ENCODE measurements at regions of chr15 and their contacts with region 1.

Region 1: DNA sequence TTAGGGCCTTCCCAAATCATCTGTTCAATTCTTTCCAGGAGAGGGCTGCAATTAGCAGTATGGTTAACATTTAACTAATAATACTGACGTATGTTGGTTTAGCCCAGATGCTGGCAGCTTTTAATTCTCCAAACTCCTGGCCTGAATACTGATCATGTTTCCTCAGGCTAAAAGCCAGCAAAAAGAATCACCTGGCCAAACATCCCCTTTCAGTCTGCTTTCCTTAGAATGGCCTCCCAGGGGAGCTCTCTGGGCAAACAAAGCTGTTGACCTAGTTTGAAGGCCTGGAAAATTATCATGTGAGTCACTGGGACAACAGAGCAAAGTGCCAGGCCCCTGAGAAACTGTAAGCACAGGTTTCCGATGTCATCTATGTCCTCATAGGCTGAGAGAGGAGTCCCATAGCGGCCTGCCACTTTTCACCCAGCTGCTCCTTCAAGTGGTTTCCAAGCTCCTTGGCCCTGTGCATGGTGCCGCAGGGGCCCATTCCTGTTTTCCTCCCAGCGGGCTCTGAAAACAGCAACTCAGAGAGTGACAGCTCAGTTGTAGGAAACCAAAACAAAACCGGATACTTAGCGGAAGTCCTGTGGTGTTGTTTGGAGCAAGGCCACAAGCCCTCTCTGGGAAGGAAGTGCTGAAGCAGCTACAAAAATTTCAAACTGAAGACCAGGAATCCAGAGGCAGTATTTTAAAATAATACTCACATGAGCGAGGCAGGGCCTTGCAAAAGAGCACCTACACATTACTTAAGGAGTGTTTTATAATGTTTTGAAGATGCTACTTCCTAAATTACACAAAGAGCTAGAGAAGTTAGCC is 36.5 kb upstream of the RAB11A start:
- DNase-seq: peak; percentile 80
- ATAC-seq: peak; percentile 77
- H3K4me3 Mint-ChIP-seq: peak overlapping the region; percentile 51
- H3K27ac Mint-ChIP-seq: peak overlapping the region; percentile 95
- H3K4me1 Mint-ChIP-seq: peaks cover 48% of the 10 kb centered on the region
- H3K27me3 Mint-ChIP-seq: no peaks in the 10 kb centered on the region

Region 2: GRCh38 chr15:65792130-65792987 is 40.4 kb before region 1 on chr15 and contains the start of gene DENND4A:
- CTCF ChIA-PET with region 1: interaction called, 48 read pairs
- DNase-seq: peak; percentile 99
- ATAC-seq: peak; percentile 84
- H3K4me3 Mint-ChIP-seq: peak within 1 kb of the TSS; percentile 93
- H3K27ac Mint-ChIP-seq: peak within 1 kb of the TSS; percentile 97
- H3K4me1 Mint-ChIP-seq: peaks cover 63% of the 10 kb centered on the region
- H3K27me3 Mint-ChIP-seq: no peaks in the 10 kb centered on the region
- total RNA-seq, gene DENND4A: 47.3 to 52.0 TPM

Region 3: DNA sequence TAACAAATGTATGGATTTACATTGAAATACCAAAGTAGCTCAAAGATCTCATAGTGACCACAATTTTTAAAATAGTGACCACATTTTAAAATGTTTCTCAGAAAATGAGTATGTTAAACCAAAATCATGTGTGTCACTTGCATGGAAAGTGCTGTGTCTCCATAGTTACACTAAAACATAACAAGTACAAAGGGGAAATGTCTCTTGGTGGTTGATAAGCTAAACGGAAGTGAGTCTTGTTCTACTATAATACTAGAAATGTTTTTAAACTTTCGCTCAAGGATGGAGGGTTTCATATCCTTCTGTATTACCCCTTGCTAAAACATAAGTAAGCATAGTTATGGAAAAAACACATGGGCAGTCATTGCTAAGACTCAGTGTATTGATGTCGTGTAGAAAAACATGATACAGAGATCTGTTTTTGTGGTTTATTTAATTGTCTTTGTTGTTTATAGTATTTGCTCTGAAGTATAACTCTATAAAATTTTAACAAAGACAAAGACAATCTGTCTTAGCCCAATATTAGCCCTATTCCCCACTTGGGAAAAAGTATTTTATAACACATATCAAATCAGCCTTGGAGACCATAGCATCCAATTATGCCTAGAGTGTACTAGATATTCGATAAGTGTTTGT is 13.7 kb before region 1 on chr15:
- CTCF ChIA-PET with region 1: interaction called, 16 read pairs
- DNase-seq: no peak
- ATAC-seq: peak; percentile 91
- H3K4me3 Mint-ChIP-seq: peak overlapping the region; percentile 40
- H3K27ac Mint-ChIP-seq: peak overlapping the region; percentile 53
- H3K4me1 Mint-ChIP-seq: peaks cover 52% of the 10 kb centered on the region
- H3K27me3 Mint-ChIP-seq: peaks cover 2% of the 10 kb centered on the region

Region 4: DNA sequence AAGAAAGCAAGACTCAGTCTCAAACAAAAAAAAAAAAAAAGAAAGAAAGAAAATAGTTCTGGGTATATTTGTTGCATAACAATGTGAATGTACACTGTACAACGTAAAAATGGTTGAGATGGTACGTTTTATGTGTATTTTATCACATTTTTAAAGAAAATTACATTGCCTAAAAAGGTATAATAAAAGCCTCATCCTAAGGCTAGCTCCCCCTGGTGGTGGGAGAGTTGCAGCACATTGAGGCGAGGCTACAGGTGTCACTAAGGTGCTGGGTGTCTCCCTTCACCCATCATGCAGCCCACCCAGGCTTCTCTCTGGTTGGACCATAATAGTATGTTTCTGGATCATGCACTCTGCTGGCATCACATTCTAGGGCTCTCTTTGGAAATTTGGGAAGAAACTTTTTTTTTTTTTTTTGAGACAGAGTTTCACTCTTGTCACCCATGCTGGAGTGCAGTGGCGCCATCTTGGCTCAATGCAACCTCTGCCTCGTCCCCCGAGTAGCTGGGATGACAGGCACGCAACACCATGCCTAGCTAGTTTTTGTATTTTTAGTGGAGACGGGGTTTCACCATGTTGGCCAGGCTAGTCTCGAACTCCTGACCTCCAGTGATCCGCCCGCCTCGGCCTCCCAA is 24.2 kb after region 1 on chr15:
- CTCF ChIA-PET with region 1: interaction called, 24 read pairs
- DNase-seq: peak; percentile 89
- ATAC-seq: peak; percentile 89
- H3K4me3 Mint-ChIP-seq: no peak overlapping the region
- H3K27ac Mint-ChIP-seq: no peak overlapping the region
- H3K4me1 Mint-ChIP-seq: peaks cover 10% of the 10 kb centered on the region
- H3K27me3 Mint-ChIP-seq: peaks cover 12% of the 10 kb centered on the region

Region 5: DNA sequence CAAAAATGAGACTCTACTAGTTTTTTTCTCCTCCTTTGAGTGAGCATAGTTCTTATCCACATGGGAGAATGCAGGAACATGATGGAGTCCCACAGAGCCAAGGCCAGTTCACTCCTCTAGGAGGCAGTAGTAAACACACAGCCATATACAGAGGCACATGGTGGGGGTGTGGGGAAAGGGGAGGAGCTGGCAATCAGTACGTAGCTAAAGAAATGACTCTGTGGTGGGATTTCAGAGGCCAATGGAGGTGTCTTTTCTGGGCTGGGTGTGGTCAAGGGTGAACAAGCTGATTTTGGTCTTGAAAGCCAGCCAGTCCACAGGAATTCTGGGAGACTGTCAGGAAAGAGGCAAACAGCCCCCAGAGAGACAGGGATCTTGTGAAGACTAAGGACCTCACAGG is 29.9 kb after region 1 on chr15:
- CTCF ChIA-PET with region 1: interaction called, 24 read pairs
- DNase-seq: peak; percentile 83
- ATAC-seq: peak; percentile 99
- H3K4me3 Mint-ChIP-seq: no peak overlapping the region
- H3K27ac Mint-ChIP-seq: no peak overlapping the region
- H3K4me1 Mint-ChIP-seq: peaks cover 11% of the 10 kb centered on the region
- H3K27me3 Mint-ChIP-seq: peaks cover 12% of the 10 kb centered on the region

Region 6: DNA sequence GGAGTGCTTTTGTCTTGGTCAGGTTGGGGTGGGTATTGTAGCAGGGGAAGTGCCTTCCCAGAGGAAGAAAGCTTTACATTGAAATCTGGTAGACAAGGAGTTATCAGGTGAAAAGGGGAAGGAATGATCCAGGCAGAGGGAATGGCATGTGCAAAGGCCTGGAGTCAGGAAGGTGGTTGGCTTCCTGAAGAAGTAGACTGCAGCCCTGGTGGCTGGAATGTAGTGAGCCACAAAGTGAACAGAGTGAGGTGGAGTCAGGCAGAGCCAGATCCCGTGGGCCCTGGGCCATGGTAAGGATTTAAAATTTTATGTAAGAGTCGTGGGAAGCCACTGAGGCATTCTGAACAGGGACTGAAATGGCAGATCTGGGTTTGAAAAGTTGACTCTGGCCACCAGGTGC is 94.8 kb after region 1 on chr15:
- CTCF ChIA-PET with region 1: no interaction called
- DNase-seq: no peak
- ATAC-seq: no peak
- H3K4me3 Mint-ChIP-seq: no peak overlapping the region
- H3K27ac Mint-ChIP-seq: no peak overlapping the region
- H3K4me1 Mint-ChIP-seq: no peaks in the 10 kb centered on the region
- H3K27me3 Mint-ChIP-seq: no peaks in the 10 kb centered on the region